Activated T-helper 1 cell treated with anti-CD3 and anti-CD28 coated beads, Interleukin-12 subunit alpha, Interleukin-12 subunit beta, Interleukin-2, Interleukin-4 antibody, amounts not matched to agents 30 ng/mL and 10 ng/mL and 1 ng/mL, durations not matched to agents 14 hours and 24 hours and 36 hours (primary cell): ENCODE measurements at regions of chr17 and their contacts with region 1.

Region 1: GRCh38 chr17:32783602-32784001 is 93.3 kb downstream of the MYO1D start:
- DNase-seq: no peak
- H3K4me3 Mint-ChIP-seq: no peak overlapping the region
- H3K27ac Mint-ChIP-seq: no peak overlapping the region
- H3K4me1 Mint-ChIP-seq: no peaks in the 10 kb centered on the region
- H3K27me3 Mint-ChIP-seq: peaks cover 19% of the 10 kb centered on the region

Region 2: GRCh38 chr17:32909787-32910369 is 126.3 kb after region 1 on chr17:
- intact Hi-C with region 1: loop called (anchors 1 kb)
- DNase-seq: peak; percentile 41
- H3K4me3 Mint-ChIP-seq: no peak overlapping the region
- H3K27ac Mint-ChIP-seq: no peak overlapping the region
- H3K4me1 Mint-ChIP-seq: peaks cover 28% of the 10 kb centered on the region
- H3K27me3 Mint-ChIP-seq: peaks cover 5% of the 10 kb centered on the region

Region 3: GRCh38 chr17:32997753-32998632 is 214.4 kb after region 1 on chr17:
- intact Hi-C with region 1: loop called (anchors 1 kb)
- DNase-seq: peak; percentile 49
- H3K4me3 Mint-ChIP-seq: no peak overlapping the region
- H3K27ac Mint-ChIP-seq: no peak overlapping the region
- H3K4me1 Mint-ChIP-seq: no peaks in the 10 kb centered on the region
- H3K27me3 Mint-ChIP-seq: peaks cover 22% of the 10 kb centered on the region